MCF 10A (cell line): ENCODE measurements at regions of chr14 and their contacts with region 1.

Region 1: DNA sequence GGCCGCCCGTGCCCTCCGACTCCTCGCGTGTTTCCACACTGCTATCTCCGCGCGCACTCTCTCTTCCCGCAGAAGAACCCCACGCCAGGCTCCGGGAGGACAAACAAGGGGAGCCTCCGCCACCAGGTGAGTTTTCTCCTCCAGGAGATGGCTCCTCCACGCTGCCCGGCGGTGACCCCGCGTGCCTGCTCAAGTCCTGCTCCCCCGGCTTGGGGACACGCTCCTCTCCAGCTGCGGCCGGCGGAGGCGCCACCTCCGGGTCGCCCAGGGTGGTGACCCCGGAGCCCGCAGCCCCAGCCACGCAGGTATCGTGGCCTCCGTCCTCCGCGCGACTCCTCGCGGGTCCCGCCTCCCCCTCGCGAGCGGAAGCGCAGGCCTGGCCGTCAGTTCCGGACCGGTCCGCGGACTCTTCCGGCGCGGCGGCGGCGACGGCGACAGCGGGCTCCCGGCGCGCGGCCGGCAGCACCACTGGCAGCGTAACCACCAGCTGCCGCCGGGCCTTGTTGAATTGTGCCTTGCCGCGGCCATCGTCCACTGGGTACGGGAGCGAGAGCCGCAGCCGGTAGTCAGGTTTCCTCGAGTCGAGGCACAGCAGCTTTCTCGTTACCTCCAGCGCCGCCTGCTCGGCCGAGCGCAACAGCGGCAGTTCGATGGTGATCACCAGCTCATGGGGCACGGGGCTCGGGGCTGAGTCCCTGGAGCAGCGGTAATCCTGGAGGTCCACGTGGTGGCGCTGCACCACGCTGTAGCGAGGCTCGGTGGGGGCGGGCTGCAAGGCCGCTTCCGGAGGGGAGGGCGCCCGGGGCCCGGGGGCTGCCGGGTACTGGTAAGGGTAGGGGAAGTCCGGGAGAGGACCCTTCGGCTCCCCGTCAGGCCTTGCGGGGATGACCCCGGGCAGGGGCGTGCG is 1.2 kb downstream of the DNAAF2 start:
- DNase-seq: peak; percentile 92
- H3K4me3 Mint-ChIP-seq: peak overlapping the region; percentile 95
- H3K27ac Mint-ChIP-seq: peak overlapping the region; percentile 99
- H3K4me1 Mint-ChIP-seq: peaks cover 14% of the 10 kb centered on the region
- H3K27me3 Mint-ChIP-seq: no peaks in the 10 kb centered on the region
- CTCF ChIP-seq: peak; percentile 83

Region 2: GRCh38 chr14:49585803-49586672 is 47.9 kb before region 1 on chr14 and contains the start of gene RPS29:
- CTCF ChIA-PET with region 1: interaction called, 8 read pairs
- POLR2A ChIA-PET with region 1: interaction called, 44 read pairs
- intact Hi-C with region 1: no loop called
- DNase-seq: peak; percentile 99
- H3K4me3 Mint-ChIP-seq: peak within 1 kb of the TSS; percentile 81
- H3K27ac Mint-ChIP-seq: peak within 1 kb of the TSS; percentile 98
- H3K4me1 Mint-ChIP-seq: peaks cover 19% of the 10 kb centered on the region
- H3K27me3 Mint-ChIP-seq: no peaks in the 10 kb centered on the region
- CTCF ChIP-seq: no peak
- total RNA-seq, gene RPS29: 1,499 and 1,837 TPM in 2 replicates

Region 3: DNA sequence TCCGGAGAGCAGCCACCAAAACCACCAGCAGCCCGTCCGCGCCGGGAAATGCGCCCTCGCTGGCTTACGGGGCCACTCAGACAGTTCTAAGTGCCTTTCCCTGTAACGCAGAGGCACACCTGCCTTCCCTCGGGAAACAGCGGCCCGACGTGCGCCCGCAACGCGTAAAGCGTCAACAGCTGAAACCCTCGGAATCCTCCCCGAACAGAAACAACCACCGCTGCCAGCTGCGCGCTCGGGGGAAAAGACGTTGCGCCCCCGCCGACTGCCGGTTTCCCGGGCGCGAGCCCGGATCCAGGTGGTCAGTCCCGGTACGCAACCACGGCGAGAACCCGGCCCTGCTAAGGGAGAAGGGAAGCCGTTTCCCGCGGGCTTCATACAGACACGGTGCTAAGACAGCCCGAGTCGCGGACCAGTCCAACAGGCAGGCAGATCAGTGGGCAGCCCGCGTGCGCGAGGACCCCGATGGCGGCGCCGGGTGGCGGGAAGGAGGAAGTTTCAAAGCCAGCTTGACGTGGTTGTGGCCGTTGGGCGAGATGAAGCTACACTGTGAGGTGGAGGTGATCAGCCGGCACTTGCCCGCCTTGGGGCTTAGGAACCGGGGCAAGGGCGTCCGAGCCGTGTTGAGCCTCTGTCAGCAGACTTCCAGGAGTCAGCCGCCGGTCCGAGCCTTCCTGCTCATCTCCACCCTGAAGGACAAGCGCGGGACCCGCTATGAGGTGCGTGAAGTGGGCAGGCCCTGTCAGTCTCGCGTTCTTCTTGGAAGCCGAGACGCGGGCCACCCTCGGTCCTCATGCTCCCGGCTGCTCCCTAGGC is 35.2 kb before region 1 on chr14 and contains the start of gene LRR1:
- CTCF ChIA-PET with region 1: interaction called, 7 read pairs
- POLR2A ChIA-PET with region 1: interaction called, 18 read pairs
- intact Hi-C with region 1: loop called (anchors 2 kb)
- DNase-seq: peak; percentile 87
- H3K4me3 Mint-ChIP-seq: peak within 1 kb of the TSS; percentile 98
- H3K27ac Mint-ChIP-seq: peak within 1 kb of the TSS; percentile 99
- H3K4me1 Mint-ChIP-seq: peaks cover 6% of the 10 kb centered on the region
- H3K27me3 Mint-ChIP-seq: no peaks in the 10 kb centered on the region
- CTCF ChIP-seq: no peak
- total RNA-seq, gene LRR1: 17.0 and 19.8 TPM in 2 replicates

Region 4: GRCh38 chr14:49620182-49621113 is 13.4 kb before region 1 on chr14 and contains the starts of genes MGAT2 and RPL36AL:
- CTCF ChIA-PET with region 1: interaction called, 7 read pairs
- POLR2A ChIA-PET with region 1: interaction called, 280 read pairs
- intact Hi-C with region 1: loop called (anchors 1 kb)
- DNase-seq: peak; percentile 98
- H3K4me3 Mint-ChIP-seq: peak within 1 kb of the TSS; percentile 99
- H3K27ac Mint-ChIP-seq: peak within 1 kb of the TSS; percentile 99
- H3K4me1 Mint-ChIP-seq: peaks cover 28% of the 10 kb centered on the region
- H3K27me3 Mint-ChIP-seq: no peaks in the 10 kb centered on the region
- CTCF ChIP-seq: peak; percentile 14
- total RNA-seq, gene MGAT2: 43.8 and 44.3 TPM in 2 replicates
- total RNA-seq, gene RPL36AL: 257 and 299 TPM in 2 replicates

Region 5: GRCh38 chr14:49828640-49829039 is 194.7 kb after region 1 on chr14:
- CTCF ChIA-PET with region 1: interaction called, 3 read pairs
- POLR2A ChIA-PET with region 1: interaction called, 4 read pairs
- intact Hi-C with region 1: loop called (anchors 1 kb)
- DNase-seq: no peak
- H3K4me3 Mint-ChIP-seq: no peak overlapping the region
- H3K27ac Mint-ChIP-seq: no peak overlapping the region
- H3K4me1 Mint-ChIP-seq: no peaks in the 10 kb centered on the region
- H3K27me3 Mint-ChIP-seq: no peaks in the 10 kb centered on the region
- CTCF ChIP-seq: no peak